Right ventricle myocardium inferior (tissue), 1 donor: ENCODE measurements at regions of chr11 and their contacts with region 1.

Region 1: GRCh38 chr11:67265633-67266423 is 445 bp upstream of the GRK2 start:
- DNase-seq: peak; percentile 92
- ATAC-seq: peak; percentile 60

Region 2: GRCh38 chr11:67288452-67289225 is 22.8 kb after region 1 on chr11:
- intact Hi-C with region 1: loop called (anchors 2 kb)
- DNase-seq: peak; percentile 96
- ATAC-seq: peak; percentile 88

Region 3: DNA sequence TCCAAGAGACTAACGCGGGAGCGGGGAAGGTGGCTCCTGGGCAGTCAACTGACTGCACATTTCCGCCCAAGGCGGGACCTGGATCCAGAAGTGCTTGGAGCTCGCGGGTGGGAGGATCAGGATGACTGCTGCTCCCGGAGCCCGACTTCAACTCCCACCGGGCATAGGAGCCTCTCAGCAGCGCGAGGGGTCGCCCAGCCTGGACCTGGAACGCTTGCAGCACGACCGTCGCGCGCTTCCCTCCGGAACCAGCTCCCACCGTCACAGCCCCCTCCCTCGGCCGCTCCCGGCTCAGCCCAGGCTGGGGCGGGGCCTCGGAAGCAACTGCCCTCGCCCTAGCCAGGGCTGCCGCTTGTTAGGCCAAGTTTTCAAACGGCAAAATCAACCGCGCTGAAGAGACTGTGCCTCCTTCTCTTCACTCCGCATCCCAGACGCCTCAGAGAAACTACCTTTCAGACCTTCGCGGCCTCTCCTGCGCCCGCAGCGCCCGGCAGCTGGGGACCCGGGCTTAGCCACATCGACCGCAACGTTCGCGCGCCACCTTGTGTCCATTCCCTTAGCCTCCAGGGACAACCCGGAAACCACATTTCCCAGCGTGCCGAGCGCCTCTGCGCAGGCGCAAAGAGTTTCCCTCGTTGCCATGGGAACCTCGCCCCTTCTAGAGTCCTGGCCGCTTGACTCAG is 51.5 kb after region 1 on chr11:
- intact Hi-C with region 1: loop called (anchors 1 kb)
- DNase-seq: peak; percentile 97
- ATAC-seq: peak; percentile 94

Region 4: GRCh38 chr11:67382276-67383136 is 116.7 kb after region 1 on chr11:
- intact Hi-C with region 1: loop called (anchors 5 kb)
- DNase-seq: peak; percentile 88
- ATAC-seq: peak; percentile 82